ENCODE measurements at regions of chrX and their contacts with region 1.

Region 1: DNA sequence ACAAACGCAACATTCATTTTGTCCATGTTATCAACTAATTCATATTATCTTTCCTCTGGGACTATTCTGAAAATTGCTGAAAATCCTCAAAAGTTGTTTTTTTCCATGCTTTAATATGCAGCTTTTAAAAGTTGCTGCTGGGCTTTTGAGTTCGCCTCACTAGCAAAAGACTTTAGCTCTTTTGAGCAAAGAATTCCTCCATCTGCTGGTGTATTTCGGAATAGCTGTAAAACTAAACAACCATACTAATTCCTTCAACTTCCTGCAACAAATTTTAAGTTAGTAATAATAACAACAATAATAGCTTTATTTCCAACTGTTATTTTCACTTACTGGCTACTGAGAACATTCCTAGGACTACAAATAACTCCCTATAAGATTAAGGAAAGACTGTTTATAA is 124.5 kb upstream of the PLAC1 start:
- DNase-seq: no peak
- ATAC-seq: no peak
- H3K4me3 ChIP-seq: no peak overlapping the region
- H3K4me3 Mint-ChIP-seq: no peak overlapping the region
- H3K27ac ChIP-seq: no peak overlapping the region
- H3K27ac Mint-ChIP-seq: no peak overlapping the region
- H3K4me1 ChIP-seq: no peaks in the 10 kb centered on the region
- H3K4me1 Mint-ChIP-seq: no peaks in the 10 kb centered on the region
- H3K27me3 ChIP-seq: no peaks in the 10 kb centered on the region
- H3K27me3 Mint-ChIP-seq: no peaks in the 10 kb centered on the region
- CTCF ChIP-seq: peak; percentile 29

Region 2: GRCh38 chrX:134684956-134685355 is 97.8 kb before region 1 on chrX:
- CTCF ChIA-PET with region 1: no interaction called
- POLR2A ChIA-PET with region 1: interaction called, 13 read pairs
- intact Hi-C with region 1: no loop called
- DNase-seq: no peak
- ATAC-seq: no peak
- H3K4me3 ChIP-seq: no peak overlapping the region
- H3K4me3 Mint-ChIP-seq: no peak overlapping the region
- H3K27ac ChIP-seq: no peak overlapping the region
- H3K27ac Mint-ChIP-seq: no peak overlapping the region
- H3K4me1 ChIP-seq: no peaks in the 10 kb centered on the region
- H3K4me1 Mint-ChIP-seq: no peaks in the 10 kb centered on the region
- H3K27me3 ChIP-seq: no peaks in the 10 kb centered on the region
- H3K27me3 Mint-ChIP-seq: no peaks in the 10 kb centered on the region
- CTCF ChIP-seq: no peak

Measured in B cell (primary cell).